PC-3 (cell line): ENCODE measurements at regions of chr5 and their contacts with region 1.

Region 1: DNA sequence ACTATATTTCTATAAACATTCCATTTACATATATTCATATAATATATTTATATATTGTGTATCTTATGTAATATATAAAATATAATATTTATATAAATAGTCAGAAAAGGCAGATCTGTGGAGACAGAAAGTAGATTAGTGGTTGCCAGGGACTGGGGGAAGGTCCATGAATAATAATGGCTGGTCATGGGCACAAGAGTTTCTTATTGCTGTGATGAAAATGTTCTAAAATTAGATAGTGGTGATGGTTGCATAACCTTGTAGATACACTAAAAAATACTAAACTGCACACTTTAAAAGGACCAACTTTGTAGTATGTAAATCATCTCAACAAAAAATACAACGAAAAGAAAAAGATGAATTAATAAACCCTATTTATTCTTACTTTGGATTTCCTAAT is 47.3 kb downstream of the NUP155 start:
- DNase-seq: no peak
- ATAC-seq: no peak
- H3K4me3 ChIP-seq: no peak overlapping the region
- H3K27ac ChIP-seq: no peak overlapping the region
- H3K4me1 ChIP-seq: no peaks in the 10 kb centered on the region
- H3K27me3 ChIP-seq: no peaks in the 10 kb centered on the region
- CTCF ChIP-seq: no peak

Region 2: DNA sequence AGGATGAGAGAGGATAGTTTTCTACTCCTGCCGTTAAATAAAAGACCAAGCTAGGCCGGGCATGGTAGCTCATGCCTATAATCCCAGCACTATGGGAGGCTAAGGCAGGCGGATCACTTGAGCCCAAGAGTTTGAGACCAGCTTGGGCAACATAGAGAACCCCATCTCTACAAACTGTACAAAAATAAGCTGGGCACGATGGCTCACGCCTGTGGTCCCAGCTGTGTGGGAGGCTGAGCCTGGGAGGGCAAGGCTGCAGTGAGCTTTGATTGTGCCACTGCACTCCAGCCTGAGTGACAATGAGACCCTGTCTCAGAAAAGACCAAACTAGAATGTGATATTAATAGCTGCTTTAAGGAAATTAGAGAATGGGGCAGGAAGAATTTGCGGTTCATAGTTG is 288.7 kb before region 1 on chr5:
- CTCF ChIA-PET with region 1: no interaction called
- POLR2A ChIA-PET with region 1: no interaction called
- intact Hi-C with region 1: loop called (anchors 10 kb)
- DNase-seq: no peak
- ATAC-seq: no peak
- H3K4me3 ChIP-seq: no peak overlapping the region
- H3K27ac ChIP-seq: no peak overlapping the region
- H3K4me1 ChIP-seq: no peaks in the 10 kb centered on the region
- H3K27me3 ChIP-seq: no peaks in the 10 kb centered on the region
- CTCF ChIP-seq: no peak